ENCODE measurements at regions of chr6 and their contacts with region 1.

Region 1: DNA sequence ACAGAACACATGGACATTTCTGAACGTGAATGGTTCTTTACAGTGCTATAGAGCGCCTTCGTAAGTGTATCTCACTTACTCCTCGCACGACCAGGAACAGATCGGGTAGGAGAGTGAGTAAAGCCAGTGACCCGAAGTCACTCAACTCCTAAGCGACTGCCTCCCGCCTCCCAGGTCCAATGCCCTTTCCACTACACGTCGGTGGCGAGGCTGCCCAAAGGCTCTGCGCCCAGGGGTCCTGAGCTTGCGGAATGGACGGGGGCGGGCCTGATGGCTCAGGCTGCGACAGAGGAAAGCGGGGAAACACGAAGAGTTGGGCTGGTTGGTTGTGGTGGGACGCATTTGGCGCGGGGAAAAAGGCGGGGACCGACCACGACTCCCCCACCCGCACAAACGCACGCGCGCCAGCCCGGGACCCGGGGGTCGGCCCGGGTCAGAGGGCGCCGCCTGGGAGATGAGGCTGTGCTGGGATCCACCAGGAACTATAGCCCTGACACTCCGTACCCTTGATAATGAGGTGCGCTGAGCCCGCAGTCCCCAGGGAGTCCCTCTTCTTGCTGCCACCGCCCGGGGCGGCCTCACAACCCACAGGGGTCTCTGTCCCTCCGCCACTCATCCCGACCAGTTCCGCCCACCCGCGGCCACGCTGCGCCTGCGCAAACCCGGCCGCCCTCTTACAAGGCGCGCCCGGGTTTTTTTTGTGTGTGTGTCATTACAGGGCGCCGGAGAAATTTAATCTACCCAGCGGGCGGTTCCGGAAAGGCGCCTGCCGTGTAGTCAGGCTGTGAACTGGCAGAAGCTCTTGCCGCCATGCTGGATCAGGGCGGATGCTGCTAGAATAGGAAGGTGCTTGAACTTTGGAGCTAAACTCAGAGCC is at the start of gene BLOC1S5:
- DNase-seq: peak; percentile 96
- H3K4me3 ChIP-seq: peak within 1 kb of the TSS; percentile 59 to 81
- H3K27ac ChIP-seq: peak within 1 kb of the TSS; percentile 83
- H3K4me1 ChIP-seq: no peaks in the 10 kb centered on the region
- H3K27me3 ChIP-seq: no peaks in the 10 kb centered on the region
- CTCF ChIP-seq: peak in 2 of 4 experiments; percentile 44
- POLR2A ChIP-seq: peak; percentile 64
- total RNA-seq, gene BLOC1S5: 9.5 to 13.0 TPM

Region 2: GRCh38 chr6:7628479-7628878 is 435.5 kb before region 1 on chr6:
- intact Hi-C with region 1: no loop called
- DNase-seq: no peak
- H3K4me3 ChIP-seq: no peak overlapping the region
- H3K27ac ChIP-seq: no peak overlapping the region
- H3K4me1 ChIP-seq: no peaks in the 10 kb centered on the region
- H3K27me3 ChIP-seq: no peaks in the 10 kb centered on the region
- CTCF ChIP-seq: no peak
- POLR2A ChIP-seq: no peak

Region 3: GRCh38 chr6:7978736-7979135 is 85.3 kb before region 1 on chr6:
- intact Hi-C with region 1: no loop called
- DNase-seq: no peak
- H3K4me3 ChIP-seq: no peak overlapping the region
- H3K27ac ChIP-seq: no peak overlapping the region
- H3K4me1 ChIP-seq: peaks cover 9% of the 10 kb centered on the region
- H3K27me3 ChIP-seq: no peaks in the 10 kb centered on the region
- CTCF ChIP-seq: no peak
- POLR2A ChIP-seq: no peak

Region 4: GRCh38 chr6:8102122-8102958 is 38.3 kb after region 1 on chr6 and contains the start of gene EEF1E1:
- intact Hi-C with region 1: loop called (anchors 2 kb)
- DNase-seq: peak; percentile 96
- H3K4me3 ChIP-seq: peak within 1 kb of the TSS; percentile 73 to 79
- H3K27ac ChIP-seq: peak within 1 kb of the TSS; percentile 44 to 67
- H3K4me1 ChIP-seq: no peaks in the 10 kb centered on the region
- H3K27me3 ChIP-seq: no peaks in the 10 kb centered on the region
- CTCF ChIP-seq: peak in 1 of 4 experiments; percentile 9
- POLR2A ChIP-seq: no peak
- total RNA-seq, gene EEF1E1: 23.1 TPM